ENCODE measurements at regions of chr3 and their contacts with region 1.

Region 1: DNA sequence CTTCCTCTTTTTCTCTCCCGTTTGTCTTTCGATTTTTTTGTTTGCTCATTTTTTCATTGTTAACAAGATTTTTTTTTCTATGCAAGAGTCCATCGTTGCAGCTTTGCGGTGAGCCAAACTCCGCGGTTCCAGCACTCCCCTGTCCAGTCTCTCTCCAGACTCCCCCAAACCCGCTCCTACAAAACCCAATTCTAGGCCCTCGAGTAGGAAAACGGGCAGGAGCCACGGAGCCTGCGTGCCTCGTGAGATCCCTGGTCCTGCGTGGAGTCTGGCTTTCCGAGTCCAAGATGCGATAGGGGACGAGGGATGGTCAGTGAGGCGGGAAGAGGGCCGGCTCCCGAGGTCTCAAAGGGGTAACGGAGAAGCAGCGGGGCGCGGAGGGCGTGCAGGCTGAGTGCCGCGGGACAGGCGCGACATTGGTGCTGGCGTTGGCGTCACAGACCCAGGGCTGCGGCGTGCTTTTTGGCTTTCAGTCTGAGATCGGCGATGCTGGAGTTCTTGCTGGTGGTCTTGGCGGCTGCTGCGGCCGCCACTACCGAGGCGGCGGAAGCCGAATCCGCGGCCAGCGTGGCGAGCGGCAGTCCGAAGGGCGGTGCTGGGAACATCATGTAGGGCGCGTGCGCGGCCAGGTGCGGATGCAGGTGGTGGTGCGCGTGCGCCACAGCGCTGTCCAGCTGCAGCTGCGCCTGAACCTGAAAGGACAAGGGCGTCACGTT is 8.5 kb downstream of the SHOX2 start:
- DNase-seq: peak; percentile 93
- H3K4me3 Mint-ChIP-seq: peak overlapping the region; percentile 89
- H3K27ac Mint-ChIP-seq: peak overlapping the region; percentile 62
- H3K4me1 Mint-ChIP-seq: peaks cover 16% of the 10 kb centered on the region
- H3K27me3 Mint-ChIP-seq: peaks cover 85% of the 10 kb centered on the region

Region 2: DNA sequence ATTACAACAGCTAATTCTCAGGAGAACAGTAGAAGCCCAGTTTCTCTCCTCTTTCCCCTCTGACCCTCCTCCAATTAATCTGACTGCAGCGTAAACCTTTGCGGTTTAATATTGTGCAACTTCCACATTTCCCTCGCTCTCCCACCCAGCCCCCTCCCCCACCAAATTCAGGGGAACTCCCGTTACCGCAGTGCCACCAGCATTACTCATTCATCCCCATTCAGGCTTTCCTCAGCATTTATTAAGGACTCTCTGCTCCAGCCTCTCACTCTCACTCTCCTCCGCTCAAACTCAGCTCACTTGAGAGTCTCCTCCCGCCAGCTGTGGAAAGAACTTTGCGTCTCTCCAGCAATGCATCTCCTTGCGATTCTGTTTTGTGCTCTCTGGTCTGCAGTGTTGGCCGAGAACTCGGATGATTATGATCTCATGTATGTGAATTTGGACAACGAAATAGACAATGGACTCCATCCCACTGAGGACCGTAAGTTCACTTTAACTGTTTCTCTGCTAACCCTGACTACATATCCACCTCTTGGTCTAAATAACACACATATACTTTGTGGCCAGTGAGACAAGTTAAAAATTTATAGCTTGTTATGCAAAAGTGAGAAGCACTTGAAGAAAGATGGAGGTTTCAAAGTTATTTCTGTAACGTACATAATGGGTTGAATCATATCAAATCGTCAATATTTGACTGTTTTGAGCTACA is 661.0 kb before region 1 on chr3 and contains the start of gene PTX3:
- intact Hi-C with region 1: loop called (anchors 5 kb)
- DNase-seq: no peak
- H3K4me3 Mint-ChIP-seq: peak within 1 kb of the TSS; percentile 66
- H3K27ac Mint-ChIP-seq: peak within 1 kb of the TSS; percentile 45
- H3K4me1 Mint-ChIP-seq: peaks cover 9% of the 10 kb centered on the region
- H3K27me3 Mint-ChIP-seq: peaks cover 49% of the 10 kb centered on the region
- total RNA-seq, gene PTX3: not detected in 2 replicates

Region 3: DNA sequence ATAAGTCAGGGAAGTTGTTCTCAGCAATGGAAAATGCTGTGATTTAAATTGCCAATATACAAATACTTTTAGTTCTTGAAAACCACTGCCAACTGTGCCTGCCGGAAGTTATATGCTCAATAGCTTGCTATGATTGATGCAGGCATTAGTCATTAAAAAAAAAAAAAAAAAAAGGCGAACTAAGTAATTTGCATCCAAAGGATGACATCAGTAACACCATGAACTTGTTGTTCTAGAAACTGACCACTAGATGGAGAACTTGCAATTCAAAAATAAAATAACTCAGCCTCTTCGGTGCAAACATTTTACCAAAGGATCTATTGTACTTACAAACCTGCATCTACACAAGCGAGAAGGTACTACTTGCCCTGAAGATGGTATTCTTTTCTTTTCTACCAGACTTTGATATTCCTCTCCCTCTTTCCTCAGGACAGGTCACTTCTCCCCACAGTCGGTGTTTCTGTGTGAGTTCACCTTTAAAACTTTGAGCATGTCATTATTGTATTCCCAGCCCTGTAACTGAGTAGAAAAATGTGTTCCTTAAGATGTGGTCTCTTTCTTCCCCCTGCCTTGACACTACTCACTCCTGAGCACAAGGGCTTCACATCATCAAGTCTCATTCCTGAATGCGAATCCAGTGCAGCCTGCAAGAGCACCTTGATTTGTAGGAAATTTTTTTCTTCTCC is 479.5 kb before region 1 on chr3:
- intact Hi-C with region 1: loop called (anchors 10 kb)
- DNase-seq: no peak
- H3K4me3 Mint-ChIP-seq: no peak overlapping the region
- H3K27ac Mint-ChIP-seq: no peak overlapping the region
- H3K4me1 Mint-ChIP-seq: peaks cover 2% of the 10 kb centered on the region
- H3K27me3 Mint-ChIP-seq: peaks cover 4% of the 10 kb centered on the region

Region 4: DNA sequence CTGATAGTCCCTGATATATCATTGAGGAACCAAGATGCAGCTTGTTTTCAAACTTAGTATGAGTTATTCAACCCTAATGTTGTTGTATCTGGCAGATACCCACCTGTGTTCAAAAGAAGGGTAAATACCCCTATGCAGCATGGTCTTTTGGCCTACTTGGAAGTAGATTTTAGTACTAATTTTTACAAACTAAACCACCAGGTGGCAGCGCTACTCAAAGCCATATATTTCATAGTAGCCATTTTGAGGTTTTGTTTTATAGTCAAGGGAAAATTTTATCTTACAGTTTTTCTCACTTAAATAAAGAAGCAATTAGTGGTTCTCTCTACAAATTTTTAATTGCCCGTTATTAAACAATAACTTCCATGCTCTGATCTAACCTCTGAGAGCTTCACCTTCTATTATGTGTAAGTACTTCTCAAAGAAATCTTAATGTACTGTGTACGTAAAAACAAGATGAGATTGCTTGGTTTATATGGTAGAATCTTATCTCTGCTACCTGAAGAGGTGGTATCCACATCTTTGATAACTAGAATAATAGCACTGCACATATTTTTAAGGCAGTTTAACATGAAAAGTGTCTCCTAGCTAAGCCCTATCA is 441.8 kb after region 1 on chr3:
- intact Hi-C with region 1: loop called (anchors 10 kb)
- DNase-seq: peak; percentile 79
- H3K4me3 Mint-ChIP-seq: no peak overlapping the region
- H3K27ac Mint-ChIP-seq: no peak overlapping the region
- H3K4me1 Mint-ChIP-seq: no peaks in the 10 kb centered on the region
- H3K27me3 Mint-ChIP-seq: no peaks in the 10 kb centered on the region

Region 5: GRCh38 chr3:158727206-158728060 is 629.7 kb after region 1 on chr3:
- intact Hi-C with region 1: no loop called
- DNase-seq: peak; percentile 86
- H3K4me3 Mint-ChIP-seq: peak overlapping the region; percentile 50
- H3K27ac Mint-ChIP-seq: no peak overlapping the region
- H3K4me1 Mint-ChIP-seq: peaks cover 34% of the 10 kb centered on the region
- H3K27me3 Mint-ChIP-seq: no peaks in the 10 kb centered on the region

Region 6: GRCh38 chr3:158801696-158802408 is 704.1 kb after region 1 on chr3 and contains the start of gene MFSD1:
- intact Hi-C with region 1: loop called (anchors 5 kb)
- DNase-seq: peak; percentile 97
- H3K4me3 Mint-ChIP-seq: peak within 1 kb of the TSS; percentile 88
- H3K27ac Mint-ChIP-seq: peak within 1 kb of the TSS; percentile 86
- H3K4me1 Mint-ChIP-seq: peaks cover 15% of the 10 kb centered on the region
- H3K27me3 Mint-ChIP-seq: peaks cover 15% of the 10 kb centered on the region
- total RNA-seq, gene MFSD1: 20.4 and 23.2 TPM in 2 replicates